Heart left ventricle (tissue), 16 donors: ENCODE measurements at regions of chr4 and their contacts with region 1.

Region 1: GRCh38 chr4:57163530-57164459 is 53.6 kb upstream of the IGFBP7 start:
- DNase-seq: peak; percentile 78 to 91 (median 82)
- ATAC-seq: peak; percentile 94 to 97 (median 96)
- H3K4me3 ChIP-seq: peak overlapping the region; percentile 44 to 82 (median 61)
- H3K27ac ChIP-seq: peak overlapping the region in 11 of 12 donors; percentile 47 to 83 (median 74)
- H3K4me1 ChIP-seq: peaks cover 0 to 12% (median 5%) of the 10 kb centered on the region in 12 donors
- H3K27me3 ChIP-seq: peaks cover 0 to 6% (median 0%) of the 10 kb centered on the region in 9 donors
- CTCF ChIP-seq: peak; percentile 71 to 93 (median 84)
- POLR2A ChIP-seq: no peak

Region 2: DNA sequence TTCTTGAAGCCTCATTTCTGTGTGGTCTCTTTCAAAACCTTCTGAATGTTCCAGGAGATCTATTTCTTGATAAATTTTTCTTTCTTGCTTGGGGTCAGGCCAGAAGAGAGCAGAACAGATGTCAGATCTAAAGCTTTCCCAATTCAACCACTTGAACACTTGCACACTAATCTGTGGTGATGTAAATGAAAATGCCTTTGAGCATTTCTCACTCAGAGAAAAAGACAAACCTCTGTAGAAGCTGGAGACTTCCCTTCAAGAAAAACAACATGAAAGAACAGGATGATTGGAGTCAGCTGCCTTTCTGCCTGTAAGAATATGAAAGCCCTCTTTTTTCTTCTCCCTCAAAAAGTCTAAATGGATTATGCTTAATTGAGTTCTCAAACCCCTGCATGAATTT is 64.9 kb before region 1 on chr4:
- intact Hi-C with region 1: no loop called
- DNase-seq: no peak
- ATAC-seq: no peak
- H3K4me3 ChIP-seq: no peak overlapping the region
- H3K27ac ChIP-seq: peak overlapping the region; percentile 44 to 97 (median 79)
- H3K4me1 ChIP-seq: peaks cover 26 to 100% (median 91%) of the 10 kb centered on the region in 12 donors
- H3K27me3 ChIP-seq: no peaks in the 10 kb centered on the region
- CTCF ChIP-seq: no peak
- POLR2A ChIP-seq: no peak

Region 3: GRCh38 chr4:57110640-57111511 is 52.9 kb before region 1 on chr4:
- intact Hi-C with region 1: loop called in 4 of 10 experiments (anchors 5 kb)
- DNase-seq: peak; percentile 53 to 69 (median 65)
- ATAC-seq: peak; percentile 25 to 64 (median 56)
- H3K4me3 ChIP-seq: peak overlapping the region; percentile 69 to 100 (median 94)
- H3K27ac ChIP-seq: peak overlapping the region; percentile 94 to 99 (median 98)
- H3K4me1 ChIP-seq: peaks cover 0 to 46% (median 31%) of the 10 kb centered on the region in 12 donors
- H3K27me3 ChIP-seq: no peaks in the 10 kb centered on the region
- CTCF ChIP-seq: no peak
- POLR2A ChIP-seq: no peak

Region 4: GRCh38 chr4:57303012-57303751 is 139.4 kb after region 1 on chr4:
- intact Hi-C with region 1: loop called in 9 of 10 experiments (anchors 1 to 10 kb)
- DNase-seq: peak in 1 of 5 donors; percentile 26
- ATAC-seq: peak in 3 of 4 donors; percentile 58 to 67 (median 61)
- H3K4me3 ChIP-seq: no peak overlapping the region
- H3K27ac ChIP-seq: no peak overlapping the region
- H3K4me1 ChIP-seq: no peaks in the 10 kb centered on the region
- H3K27me3 ChIP-seq: no peaks in the 10 kb centered on the region
- CTCF ChIP-seq: peak in 9 of 12 donors; percentile 13 to 50 (median 26)
- POLR2A ChIP-seq: no peak

Region 5: DNA sequence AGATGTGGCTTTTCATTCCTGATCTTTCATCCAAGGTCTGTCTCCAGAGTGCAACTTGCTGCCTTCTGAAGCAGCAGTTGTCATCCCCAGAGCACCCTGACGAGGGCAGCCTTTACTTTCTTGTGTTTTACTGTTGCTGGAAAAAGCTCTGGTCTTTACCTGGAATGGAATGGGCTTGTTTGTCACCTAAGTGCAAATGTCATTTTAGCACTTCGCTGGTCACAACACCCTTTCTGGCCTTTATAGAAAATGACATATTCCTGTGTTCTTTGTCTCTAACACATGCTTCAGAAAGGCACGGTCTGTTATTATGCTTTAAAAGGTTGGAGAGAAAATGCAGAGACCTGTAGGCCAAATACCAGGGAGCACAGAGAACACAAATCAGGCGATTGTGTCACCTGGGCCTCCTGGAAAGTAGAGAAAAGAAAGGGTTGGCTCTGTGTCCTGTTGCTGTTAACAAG is 279.1 kb after region 1 on chr4:
- intact Hi-C with region 1: loop called in 1 of 10 experiments (anchors 5 kb)
- DNase-seq: peak in 3 of 5 donors; percentile 22 to 43 (median 31)
- ATAC-seq: peak; percentile 62 to 82 (median 69)
- H3K4me3 ChIP-seq: no peak overlapping the region
- H3K27ac ChIP-seq: peak overlapping the region in 2 of 12 donors; percentile 1 to 30
- H3K4me1 ChIP-seq: peaks cover 0 to 16% (median 0%) of the 10 kb centered on the region in 12 donors
- H3K27me3 ChIP-seq: no peaks in the 10 kb centered on the region
- CTCF ChIP-seq: peak; percentile 55 to 80 (median 69)
- POLR2A ChIP-seq: no peak

Region 6: DNA sequence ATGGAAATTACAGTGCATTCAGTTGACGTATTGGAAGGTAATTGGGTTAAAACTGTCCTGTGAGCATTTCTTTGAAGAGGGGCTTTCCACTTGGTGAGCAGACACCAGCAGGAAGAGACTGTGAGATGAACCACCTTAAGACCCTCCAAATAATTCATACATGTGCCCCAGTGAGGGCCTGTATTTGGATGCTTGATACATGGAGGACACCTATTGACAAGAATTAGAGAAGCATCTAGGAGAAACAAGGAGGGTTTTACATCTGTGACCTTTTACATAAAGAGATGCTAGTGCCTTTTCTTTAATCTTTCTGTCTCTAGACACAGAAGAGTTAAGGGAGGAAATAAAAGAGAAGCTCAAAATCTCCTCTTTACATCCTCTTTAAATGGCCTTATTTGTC is 1061.7 kb after region 1 on chr4:
- intact Hi-C with region 1: loop called in 1 of 10 experiments (anchors 10 kb)
- DNase-seq: no peak
- ATAC-seq: no peak
- H3K4me3 ChIP-seq: no peak overlapping the region
- H3K27ac ChIP-seq: no peak overlapping the region
- H3K4me1 ChIP-seq: no peaks in the 10 kb centered on the region
- H3K27me3 ChIP-seq: no peaks in the 10 kb centered on the region
- CTCF ChIP-seq: peak in 3 of 12 donors; percentile 8 to 14 (median 11)
- POLR2A ChIP-seq: no peak